Ovary (tissue), 10 donors: ENCODE measurements at regions of chr11 and their contacts with region 1.

Region 1: GRCh38 chr11:37881741-37882140 is 1283.7 kb upstream of the RAG2 start:
- DNase-seq: no peak
- H3K4me3 ChIP-seq: no peak overlapping the region
- H3K27ac ChIP-seq: no peak overlapping the region
- H3K4me1 ChIP-seq: no peaks in the 10 kb centered on the region
- H3K27me3 ChIP-seq: no peaks in the 10 kb centered on the region
- CTCF ChIP-seq: no peak
- EP300 ChIP-seq: no peak
- POLR2A ChIP-seq: no peak

Region 2: GRCh38 chr11:37812281-37812880 is 69.4 kb before region 1 on chr11:
- intact Hi-C with region 1: loop called in 1 of 4 experiments (anchors 10 kb)
- DNase-seq: peak in 1 of 5 donors; percentile 5
- H3K4me3 ChIP-seq: no peak overlapping the region
- H3K27ac ChIP-seq: no peak overlapping the region
- H3K4me1 ChIP-seq: no peaks in the 10 kb centered on the region
- H3K27me3 ChIP-seq: no peaks in the 10 kb centered on the region
- CTCF ChIP-seq: no peak
- EP300 ChIP-seq: no peak
- POLR2A ChIP-seq: no peak